Sigmoid colon (tissue), 7 donors: ENCODE measurements at regions of chr19 and their contacts with region 1.

Region 1: DNA sequence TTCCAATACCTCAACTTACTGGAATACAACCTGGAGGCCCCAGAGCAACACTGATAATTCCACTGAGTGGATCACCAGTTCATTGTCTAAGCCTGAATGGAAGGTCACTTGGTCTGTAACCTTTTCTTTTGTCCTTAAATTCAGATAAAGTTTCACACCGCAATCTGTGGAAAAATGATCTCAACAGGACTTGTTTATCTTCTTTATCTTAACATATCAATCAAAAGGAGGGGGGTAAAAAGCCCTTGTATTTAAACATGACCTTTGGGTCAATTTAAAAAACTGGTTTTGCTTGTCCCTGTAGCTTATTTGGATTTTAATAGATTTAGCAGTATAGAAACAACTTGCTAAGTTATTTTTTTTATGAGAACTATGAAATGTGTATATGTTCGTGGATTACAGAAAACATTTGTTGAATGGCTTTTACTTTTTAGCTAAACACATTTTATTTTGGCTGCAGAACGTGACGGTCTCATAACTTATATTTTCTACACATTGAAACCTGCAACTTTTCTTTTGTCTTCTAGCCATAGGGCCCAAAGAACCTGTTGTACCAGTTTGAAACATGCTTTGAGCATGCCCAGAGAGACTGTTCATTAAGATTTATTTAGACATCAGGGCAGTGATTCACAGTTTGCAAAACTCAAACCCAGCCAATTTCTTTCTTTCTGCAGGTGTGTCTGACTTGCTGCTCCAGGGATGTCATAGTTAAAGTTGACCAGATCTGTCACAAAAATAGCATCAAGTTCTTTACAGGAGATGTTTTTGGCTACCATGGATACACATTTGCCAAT is 21.8 kb downstream of the SAE1 start:
- DNase-seq: no peak
- H3K4me3 ChIP-seq: no peak overlapping the region
- H3K27ac ChIP-seq: peak overlapping the region; percentile 62 to 89 (median 84)
- H3K4me1 ChIP-seq: peaks cover 0 to 88% (median 76%) of the 10 kb centered on the region in 4 donors
- H3K27me3 ChIP-seq: no peaks in the 10 kb centered on the region
- CTCF ChIP-seq: no peak
- EP300 ChIP-seq: peak in 1 of 4 donors; percentile 38
- POLR2A ChIP-seq: no peak

Region 2: GRCh38 chr19:46471116-46471733 is 681.2 kb before region 1 on chr19 and contains the start of gene PNMA8A:
- intact Hi-C with region 1: no loop called
- DNase-seq: peak; percentile 86
- H3K4me3 ChIP-seq: peak within 1 kb of the TSS; percentile 15 to 57 (median 48)
- H3K27ac ChIP-seq: peak within 1 kb of the TSS; percentile 66 to 79 (median 72)
- H3K4me1 ChIP-seq: peaks cover 0 to 14% (median 13%) of the 10 kb centered on the region in 4 donors
- H3K27me3 ChIP-seq: no peaks in the 10 kb centered on the region
- CTCF ChIP-seq: no peak
- EP300 ChIP-seq: no peak
- POLR2A ChIP-seq: no peak
- total RNA-seq, gene PNMA8A: 1.5 to 8.4 (median 5.5) TPM

Region 3: GRCh38 chr19:46932346-46932745 is 220.1 kb before region 1 on chr19:
- intact Hi-C with region 1: no loop called
- DNase-seq: no peak
- H3K4me3 ChIP-seq: no peak overlapping the region
- H3K27ac ChIP-seq: no peak overlapping the region
- H3K4me1 ChIP-seq: peaks cover 0 to 53% (median 29%) of the 10 kb centered on the region in 4 donors
- H3K27me3 ChIP-seq: no peaks in the 10 kb centered on the region
- CTCF ChIP-seq: no peak
- EP300 ChIP-seq: no peak
- POLR2A ChIP-seq: no peak

Region 4: GRCh38 chr19:47112997-47113849 is 39.2 kb before region 1 on chr19 and contains the start of gene ZC3H4:
- intact Hi-C with region 1: no loop called
- DNase-seq: peak; percentile 100
- H3K4me3 ChIP-seq: peak within 1 kb of the TSS; percentile 78 to 98 (median 97)
- H3K27ac ChIP-seq: peak within 1 kb of the TSS; percentile 97 to 100 (median 100)
- H3K4me1 ChIP-seq: peaks cover 0 to 28% (median 27%) of the 10 kb centered on the region in 4 donors
- H3K27me3 ChIP-seq: no peaks in the 10 kb centered on the region
- CTCF ChIP-seq: no peak
- EP300 ChIP-seq: peak in 1 of 4 donors; percentile 73
- POLR2A ChIP-seq: peak; percentile 69 to 74
- total RNA-seq, gene ZC3H4: 19.3 to 25.3 (median 21.8) TPM

Region 5: GRCh38 chr19:47210689-47211316 is 58.4 kb after region 1 on chr19:
- intact Hi-C with region 1: loop called (anchors 5 kb)
- DNase-seq: peak; percentile 90
- H3K4me3 ChIP-seq: no peak overlapping the region
- H3K27ac ChIP-seq: peak overlapping the region; percentile 67 to 80 (median 75)
- H3K4me1 ChIP-seq: peaks cover 0 to 13% (median 11%) of the 10 kb centered on the region in 4 donors
- H3K27me3 ChIP-seq: no peaks in the 10 kb centered on the region
- CTCF ChIP-seq: peak; percentile 69 to 84 (median 76)
- EP300 ChIP-seq: peak in 1 of 4 donors; percentile 78
- POLR2A ChIP-seq: no peak

Region 6: DNA sequence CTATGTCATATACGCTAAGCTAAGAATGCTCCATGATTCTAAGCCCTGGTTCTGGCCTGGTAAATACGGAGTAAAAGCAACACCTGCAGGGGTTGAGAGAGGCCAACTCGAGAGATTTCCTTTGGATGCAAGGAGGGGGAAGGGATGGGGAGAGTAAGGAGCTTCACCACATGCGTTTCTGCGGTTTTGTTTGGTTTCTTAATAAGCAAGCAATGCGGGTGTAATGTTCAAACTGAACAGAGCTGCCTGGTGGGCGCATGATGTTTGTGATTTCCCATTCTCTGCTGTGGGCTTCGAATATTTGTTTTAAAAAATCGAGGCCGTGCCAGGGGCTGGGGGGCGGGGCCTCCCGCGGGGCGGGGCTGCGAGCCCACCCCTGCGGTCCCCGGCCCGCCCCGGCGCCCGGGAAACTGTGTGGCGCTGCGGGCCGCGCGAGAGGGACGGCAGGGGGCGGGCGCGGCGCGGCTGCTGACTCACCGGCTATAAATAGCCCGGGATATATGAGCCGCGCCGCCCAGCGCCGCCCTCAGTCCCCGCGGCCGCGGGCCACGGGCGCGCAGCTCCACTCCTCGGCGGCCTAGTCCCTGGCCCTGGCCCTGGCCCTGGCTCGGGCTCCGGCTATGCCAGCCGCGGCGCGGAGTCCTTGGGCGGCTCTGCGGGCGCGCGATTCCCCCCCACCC is 73.5 kb after region 1 on chr19:
- intact Hi-C with region 1: loop called (anchors 5 kb)
- DNase-seq: peak; percentile 96
- H3K4me3 ChIP-seq: peak overlapping the region; percentile 46 to 99 (median 87)
- H3K27ac ChIP-seq: peak overlapping the region; percentile 99 to 100 (median 100)
- H3K4me1 ChIP-seq: peaks cover 0 to 49% (median 46%) of the 10 kb centered on the region in 4 donors
- H3K27me3 ChIP-seq: no peaks in the 10 kb centered on the region
- CTCF ChIP-seq: peak in 1 of 4 experiments; percentile 42
- EP300 ChIP-seq: no peak
- POLR2A ChIP-seq: peak; percentile 74 to 83

Region 7: GRCh38 chr19:47363758-47364531 is 211.5 kb after region 1 on chr19:
- intact Hi-C with region 1: no loop called
- DNase-seq: no peak
- H3K4me3 ChIP-seq: no peak overlapping the region
- H3K27ac ChIP-seq: no peak overlapping the region
- H3K4me1 ChIP-seq: no peaks in the 10 kb centered on the region
- H3K27me3 ChIP-seq: no peaks in the 10 kb centered on the region
- CTCF ChIP-seq: no peak
- EP300 ChIP-seq: no peak
- POLR2A ChIP-seq: no peak